IMR-90 (cell line): ENCODE measurements at regions of chr10 and their contacts with region 1.

Region 1: GRCh38 chr10:44539178-44539577 is 154.3 kb upstream of the CXCL12 start:
- DNase-seq: no peak
- ATAC-seq: no peak
- H3K4me3 ChIP-seq: no peak overlapping the region
- H3K27ac ChIP-seq: no peak overlapping the region
- H3K4me1 ChIP-seq: no peaks in the 10 kb centered on the region
- H3K27me3 ChIP-seq: no peaks in the 10 kb centered on the region; the same call in 1 of the 2 replicates
- CTCF ChIP-seq: no peak
- POLR2A ChIP-seq: no peak
- RAD21 ChIP-seq: no peak

Region 2: GRCh38 chr10:44659320-44659719 is 120.1 kb after region 1 on chr10:
- CTCF ChIA-PET with region 1: no interaction called
- POLR2A ChIA-PET with region 1: no interaction called
- dilution Hi-C with region 1: no loop called
- in situ Hi-C with region 1: no loop called
- intact Hi-C with region 1: loop called (anchors 5 kb)
- DNase-seq: no peak
- ATAC-seq: no peak
- H3K4me3 ChIP-seq: no peak overlapping the region
- H3K27ac ChIP-seq: no peak overlapping the region
- H3K4me1 ChIP-seq: peaks cover 5% of the 10 kb centered on the region
- H3K27me3 ChIP-seq: peaks cover 2% of the 10 kb centered on the region; the same call in 1 of the 2 replicates
- CTCF ChIP-seq: no peak
- POLR2A ChIP-seq: no peak
- RAD21 ChIP-seq: no peak

Region 3: DNA sequence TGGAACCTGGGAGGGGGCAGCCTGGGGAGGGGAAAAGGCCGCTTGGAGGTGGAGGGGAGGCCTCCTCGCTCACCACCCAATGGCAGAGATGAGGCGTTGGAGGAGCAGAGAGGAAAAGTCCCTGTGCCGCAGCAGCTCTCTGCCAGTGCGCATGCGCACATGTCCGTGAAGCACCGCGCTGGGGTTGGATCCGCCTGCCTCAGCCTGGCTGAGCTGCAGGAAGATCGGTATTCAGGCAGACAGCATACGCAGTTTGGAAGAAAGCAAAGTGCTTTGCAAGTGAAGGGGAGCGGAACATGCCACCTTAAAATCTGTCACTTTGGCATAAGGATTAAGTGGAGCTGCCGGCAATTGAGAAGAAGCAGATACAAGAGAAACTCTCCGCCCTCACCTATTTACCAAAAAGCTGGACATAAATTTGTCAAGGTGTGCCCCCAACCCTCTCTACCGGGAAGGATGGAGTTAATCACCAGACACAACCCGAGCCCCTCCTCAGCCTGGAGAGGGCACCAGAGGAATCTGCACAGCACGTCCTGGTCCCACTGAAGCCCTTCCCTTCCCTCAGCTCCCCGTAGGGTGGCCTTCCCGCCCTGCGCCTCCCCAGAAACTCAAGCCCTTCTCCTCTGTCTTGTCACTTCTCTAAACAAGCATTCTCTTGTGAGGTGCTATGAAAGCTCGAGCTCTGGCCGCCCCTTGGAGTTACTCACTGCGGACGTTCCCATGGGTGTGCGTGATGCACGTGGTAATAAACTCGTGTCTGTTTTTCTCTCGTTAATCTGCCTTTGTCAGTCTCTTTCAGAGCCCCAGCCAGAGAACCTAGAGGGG is 339.7 kb after region 1 on chr10:
- CTCF ChIA-PET with region 1: no interaction called
- POLR2A ChIA-PET with region 1: no interaction called
- dilution Hi-C with region 1: no loop called
- in situ Hi-C with region 1: no loop called
- intact Hi-C with region 1: no loop called
- DNase-seq: peak; percentile 82
- ATAC-seq: peak; percentile 97
- H3K4me3 ChIP-seq: peak overlapping the region; percentile 13
- H3K27ac ChIP-seq: no peak overlapping the region
- H3K4me1 ChIP-seq: peaks cover 9% of the 10 kb centered on the region
- H3K27me3 ChIP-seq: peaks cover 35% of the 10 kb centered on the region
- CTCF ChIP-seq: no peak
- POLR2A ChIP-seq: no peak
- RAD21 ChIP-seq: 0 out of 2 replicates have a peak, but pooled peaks have one; percentile 5

Region 4: DNA sequence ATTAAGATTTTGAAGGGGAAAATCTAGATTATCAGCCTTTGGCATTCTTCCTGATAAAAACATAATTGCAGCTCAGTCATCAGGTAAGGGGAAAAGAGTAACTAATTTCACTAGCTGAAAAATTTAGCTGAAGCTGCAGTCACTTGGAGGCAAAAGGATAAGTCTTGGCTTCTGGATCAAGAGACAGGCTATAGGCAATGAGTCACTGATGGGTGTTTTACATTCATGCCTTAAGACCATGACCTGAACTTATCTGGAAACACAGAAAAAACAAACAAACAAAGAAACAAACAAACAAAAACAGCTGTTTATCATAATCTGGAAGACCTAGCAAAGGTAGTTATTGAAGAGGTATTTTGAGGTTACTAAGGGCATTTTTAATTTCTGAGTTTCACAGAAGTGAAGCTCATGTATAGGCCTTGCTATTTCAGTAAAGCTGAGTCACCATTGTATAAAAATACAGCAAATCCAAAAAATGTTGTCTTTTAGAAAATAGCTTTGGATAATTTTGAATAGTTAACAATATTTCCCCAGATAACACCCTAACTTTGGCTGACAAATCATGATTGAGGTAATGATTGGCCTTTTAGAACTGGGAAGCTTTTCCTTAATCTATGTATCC is 501.9 kb after region 1 on chr10:
- CTCF ChIA-PET with region 1: no interaction called
- POLR2A ChIA-PET with region 1: no interaction called
- dilution Hi-C with region 1: no loop called
- in situ Hi-C with region 1: no loop called
- intact Hi-C with region 1: loop called (anchors 10 kb)
- DNase-seq: peak; percentile 7
- ATAC-seq: no peak; the same call in 1 of the 2 replicates
- H3K4me3 ChIP-seq: no peak overlapping the region
- H3K27ac ChIP-seq: no peak overlapping the region
- H3K4me1 ChIP-seq: no peaks in the 10 kb centered on the region
- H3K27me3 ChIP-seq: no peaks in the 10 kb centered on the region; the same call in 1 of the 2 replicates
- CTCF ChIP-seq: no peak
- POLR2A ChIP-seq: no peak
- RAD21 ChIP-seq: no peak